Activated naive CD4-positive, alpha-beta T cell treated with anti-CD3 and anti-CD28 coated beads for 36 hours (primary cell): ENCODE measurements at regions of chr3 and their contacts with region 1.

Region 1: DNA sequence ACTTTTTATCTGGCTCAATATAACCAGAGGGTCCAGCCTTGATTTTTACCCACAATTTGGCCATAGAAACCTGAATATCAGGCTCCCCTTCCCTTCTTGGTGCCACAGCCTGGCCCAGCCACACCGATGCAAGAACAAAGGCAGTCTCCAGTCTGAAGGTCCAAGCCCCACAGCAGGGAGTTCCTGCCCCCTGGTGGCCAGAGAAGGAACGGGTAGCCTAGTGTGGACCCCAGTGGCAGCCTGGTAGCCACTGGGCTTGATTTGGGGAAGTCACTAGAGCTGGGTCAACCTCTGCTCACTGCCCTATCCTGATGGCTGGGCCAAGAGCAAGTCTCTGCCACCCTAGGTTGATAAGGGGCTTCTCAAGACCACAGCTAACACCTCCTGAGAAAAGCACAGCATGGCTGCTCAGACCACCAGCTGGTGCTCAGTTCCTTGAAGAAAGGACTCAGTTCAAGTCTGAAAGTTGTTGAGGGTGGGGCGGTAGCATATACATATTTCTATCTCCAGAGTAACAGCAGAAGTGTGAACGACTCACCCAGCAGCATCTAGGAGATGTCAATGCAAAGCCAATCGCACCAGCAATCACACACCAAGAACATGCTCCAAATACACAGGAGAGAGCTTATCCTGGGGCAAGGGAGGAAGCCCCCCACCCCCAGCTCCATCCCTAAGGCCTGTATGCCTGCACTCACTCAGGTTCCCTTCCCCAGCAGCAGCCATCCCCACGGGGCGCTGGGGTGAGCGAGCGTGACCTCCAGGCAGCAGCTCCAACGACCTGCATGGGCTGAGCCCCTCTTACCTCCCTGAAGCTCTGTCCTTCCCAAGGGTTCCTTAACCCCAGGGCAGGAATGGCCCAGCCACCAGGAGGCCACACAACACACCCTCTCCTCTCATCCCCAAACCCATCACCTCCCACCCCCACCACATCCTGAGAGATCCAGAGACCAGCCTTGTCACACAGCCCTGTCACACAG is 7.6 kb downstream of the PFKFB4 start:
- DNase-seq: peak; percentile 93
- H3K4me3 Mint-ChIP-seq: no peak overlapping the region
- H3K27ac Mint-ChIP-seq: no peak overlapping the region
- H3K4me1 Mint-ChIP-seq: peaks cover 4% of the 10 kb centered on the region
- H3K27me3 Mint-ChIP-seq: no peaks in the 10 kb centered on the region

Region 2: DNA sequence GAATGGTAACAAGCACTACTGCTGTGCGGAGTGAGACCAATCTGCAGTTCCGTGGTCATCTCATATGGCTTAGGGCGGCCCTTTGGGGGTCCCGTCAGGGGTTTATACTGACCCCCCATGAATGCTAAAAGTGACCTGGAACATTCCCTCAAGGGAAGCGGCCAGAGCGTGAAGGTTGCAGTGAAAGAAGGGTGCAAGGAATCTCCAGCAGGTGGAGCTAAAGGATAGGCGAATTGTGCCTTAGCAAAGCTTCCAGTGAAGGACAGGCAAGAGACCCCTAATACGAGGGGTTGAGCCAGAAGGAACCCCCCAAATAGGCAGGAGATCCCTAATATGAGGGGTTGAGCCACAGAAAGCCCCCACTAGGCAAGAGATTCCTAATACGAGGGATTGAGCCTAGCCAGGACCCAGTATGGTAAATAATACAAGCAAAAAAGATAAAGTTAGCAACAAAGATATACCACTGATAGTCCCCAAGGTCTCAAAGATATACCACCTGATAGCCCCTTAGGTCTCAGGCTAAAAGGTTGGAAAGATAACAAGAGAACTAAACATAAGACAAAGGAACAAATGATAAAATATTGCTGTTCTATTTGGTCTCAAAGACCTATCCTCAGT is 275.3 kb before region 1 on chr3:
- CTCF ChIA-PET with region 1: interaction called, 4 read pairs
- intact Hi-C with region 1: loop called (anchors 1 kb)
- DNase-seq: peak; percentile 71
- H3K4me3 Mint-ChIP-seq: no peak overlapping the region
- H3K27ac Mint-ChIP-seq: no peak overlapping the region
- H3K4me1 Mint-ChIP-seq: peaks cover 14% of the 10 kb centered on the region
- H3K27me3 Mint-ChIP-seq: no peaks in the 10 kb centered on the region

Region 3: DNA sequence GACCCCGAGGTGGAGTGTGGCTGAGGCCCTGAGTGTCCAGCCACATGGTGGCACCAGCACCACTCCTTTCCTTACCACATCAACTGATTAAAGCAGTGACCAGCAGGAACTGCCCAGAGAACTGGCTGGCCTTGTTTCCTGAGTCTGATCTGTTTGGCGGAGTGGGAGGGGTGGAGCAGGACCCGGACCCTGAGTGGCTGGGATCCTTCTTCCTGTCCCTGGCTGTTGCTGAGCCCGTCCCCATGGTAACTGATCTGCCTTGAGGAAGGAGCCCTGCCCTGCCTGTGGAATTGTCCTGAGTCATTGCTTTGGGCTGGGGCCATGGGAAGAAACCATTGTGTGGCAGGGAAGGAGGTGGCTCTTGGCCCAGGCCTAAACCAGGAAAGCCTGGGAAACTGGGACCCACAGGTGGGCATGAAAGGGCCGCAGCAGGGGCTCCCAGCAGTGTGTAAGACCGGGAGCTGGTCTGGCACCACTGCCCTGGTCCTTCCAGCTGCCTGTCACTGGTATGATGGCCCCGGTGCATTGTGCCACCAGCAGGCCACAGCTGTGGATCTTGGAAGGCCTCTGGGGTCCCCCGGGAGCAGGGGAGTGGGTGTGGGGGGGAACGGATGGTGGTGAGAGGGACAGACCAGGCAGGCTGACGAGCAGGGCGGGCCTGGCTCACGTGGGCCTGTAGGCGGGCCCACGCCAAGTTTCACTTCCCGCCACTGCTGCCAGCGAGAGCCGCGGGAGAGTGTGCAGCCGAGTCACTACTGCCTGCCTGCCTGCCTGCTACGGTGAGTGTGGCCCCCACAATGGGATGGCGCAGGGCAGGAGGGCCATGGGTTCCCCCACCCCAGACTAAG is 83.3 kb before region 1 on chr3:
- CTCF ChIA-PET with region 1: interaction called, 4 read pairs
- intact Hi-C with region 1: loop called (anchors 1 kb)
- DNase-seq: peak; percentile 89
- H3K4me3 Mint-ChIP-seq: peak overlapping the region; percentile 93
- H3K27ac Mint-ChIP-seq: peak overlapping the region; percentile 94
- H3K4me1 Mint-ChIP-seq: peaks cover 47% of the 10 kb centered on the region
- H3K27me3 Mint-ChIP-seq: no peaks in the 10 kb centered on the region

Region 4: DNA sequence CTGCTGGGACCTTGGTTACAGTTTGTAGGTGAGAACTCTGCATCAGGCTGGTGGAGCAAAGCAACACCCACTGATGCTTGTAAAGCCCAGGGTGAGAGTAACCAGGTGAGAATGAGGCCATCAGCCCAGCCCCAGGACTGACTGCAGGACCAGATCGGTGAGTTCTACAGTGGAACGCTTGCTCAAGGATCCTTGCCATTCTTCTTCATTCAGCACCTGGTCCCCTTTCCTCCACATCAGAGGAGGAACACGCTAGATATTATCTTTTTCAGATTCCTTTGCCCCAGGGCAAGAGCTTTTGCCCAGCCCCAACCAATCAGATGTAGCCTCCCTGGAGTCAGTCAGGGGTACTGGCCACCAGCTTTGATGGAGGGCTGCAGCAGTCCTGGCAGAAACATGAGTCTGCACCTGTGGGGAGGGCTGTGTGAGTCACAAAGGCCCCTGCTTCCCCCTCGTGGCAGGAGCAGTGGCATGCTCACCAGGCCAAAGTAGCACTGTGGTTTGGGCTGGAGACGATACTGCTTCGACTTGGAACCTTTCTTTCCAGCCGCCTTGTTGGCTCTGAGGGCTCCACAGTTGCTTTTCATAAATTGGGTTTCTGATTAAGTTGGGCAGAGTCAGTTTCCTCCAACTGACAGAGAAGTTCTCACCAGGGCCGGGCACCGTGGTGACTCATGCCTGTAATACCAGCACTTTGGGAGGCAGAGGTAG is 41.5 kb before region 1 on chr3:
- CTCF ChIA-PET with region 1: interaction called, 4 read pairs
- intact Hi-C with region 1: loop called (anchors 1 kb)
- DNase-seq: peak; percentile 82
- H3K4me3 Mint-ChIP-seq: peak overlapping the region; percentile 32
- H3K27ac Mint-ChIP-seq: peak overlapping the region; percentile 66
- H3K4me1 Mint-ChIP-seq: peaks cover 47% of the 10 kb centered on the region
- H3K27me3 Mint-ChIP-seq: no peaks in the 10 kb centered on the region

Region 5: DNA sequence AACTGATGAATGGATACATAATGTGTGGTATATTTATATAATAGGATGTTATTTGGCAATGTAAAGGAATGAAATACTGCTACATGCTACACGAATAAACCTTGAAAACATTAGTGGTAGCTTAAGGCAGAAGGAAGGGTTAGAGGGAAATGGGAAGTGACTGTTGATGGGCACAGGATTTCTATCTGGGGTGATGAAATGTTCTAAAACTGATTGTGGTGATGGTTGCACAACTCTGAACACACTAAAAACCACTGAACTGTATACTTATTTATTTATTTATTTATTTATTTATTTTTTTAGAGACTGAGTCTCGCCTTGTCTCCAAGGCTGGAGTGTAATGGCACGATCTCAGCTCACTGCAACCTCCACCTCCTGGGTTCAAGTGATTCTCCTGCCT is 20.3 kb before region 1 on chr3:
- CTCF ChIA-PET with region 1: interaction called, 11 read pairs
- intact Hi-C with region 1: no loop called
- DNase-seq: no peak
- H3K4me3 Mint-ChIP-seq: no peak overlapping the region
- H3K27ac Mint-ChIP-seq: no peak overlapping the region
- H3K4me1 Mint-ChIP-seq: no peaks in the 10 kb centered on the region
- H3K27me3 Mint-ChIP-seq: no peaks in the 10 kb centered on the region

Region 6: DNA sequence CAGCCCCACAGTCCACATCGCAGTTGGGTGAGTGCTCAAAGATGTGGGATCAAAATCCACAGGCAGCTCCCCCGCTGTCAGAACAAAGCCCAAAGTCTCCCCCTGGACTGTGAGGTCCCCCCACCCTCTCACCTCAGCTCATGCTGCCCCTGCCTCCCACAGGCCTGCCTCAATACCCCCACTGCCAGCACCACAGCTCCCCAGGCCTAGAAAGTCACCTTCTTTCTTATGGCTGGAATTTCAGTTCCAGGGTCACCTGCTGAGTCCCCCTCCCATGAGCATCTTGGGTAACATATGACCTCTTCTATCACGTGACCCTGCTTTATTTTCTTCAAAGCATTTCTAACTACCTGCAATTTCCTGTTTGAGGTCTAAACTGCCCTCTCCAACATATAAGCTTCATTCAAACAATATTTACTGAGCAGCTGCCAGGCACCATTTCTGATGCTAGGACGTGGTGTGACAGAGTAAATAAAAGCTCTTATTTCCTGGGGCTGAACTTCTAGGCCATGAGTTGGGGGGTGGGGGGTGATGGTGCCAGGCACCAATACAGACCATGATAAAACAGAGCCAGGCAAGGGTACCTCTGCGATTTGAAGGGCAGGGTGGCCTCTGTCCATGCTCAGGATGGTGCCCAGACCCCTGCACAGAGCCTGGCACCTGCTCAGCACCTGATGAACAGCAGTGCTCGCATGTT is 75.0 kb after region 1 on chr3:
- CTCF ChIA-PET with region 1: no interaction called
- intact Hi-C with region 1: no loop called
- DNase-seq: no peak
- H3K4me3 Mint-ChIP-seq: no peak overlapping the region
- H3K27ac Mint-ChIP-seq: no peak overlapping the region
- H3K4me1 Mint-ChIP-seq: peaks cover 6% of the 10 kb centered on the region
- H3K27me3 Mint-ChIP-seq: no peaks in the 10 kb centered on the region

Region 7: GRCh38 chr3:49434731-49435130 is 885.7 kb after region 1 on chr3:
- CTCF ChIA-PET with region 1: no interaction called
- intact Hi-C with region 1: no loop called
- DNase-seq: no peak
- H3K4me3 Mint-ChIP-seq: no peak overlapping the region
- H3K27ac Mint-ChIP-seq: no peak overlapping the region
- H3K4me1 Mint-ChIP-seq: no peaks in the 10 kb centered on the region
- H3K27me3 Mint-ChIP-seq: no peaks in the 10 kb centered on the region